Endothelial cell of umbilical vein (primary cell): ENCODE measurements at regions of chr3 and their contacts with region 1.

Region 1: DNA sequence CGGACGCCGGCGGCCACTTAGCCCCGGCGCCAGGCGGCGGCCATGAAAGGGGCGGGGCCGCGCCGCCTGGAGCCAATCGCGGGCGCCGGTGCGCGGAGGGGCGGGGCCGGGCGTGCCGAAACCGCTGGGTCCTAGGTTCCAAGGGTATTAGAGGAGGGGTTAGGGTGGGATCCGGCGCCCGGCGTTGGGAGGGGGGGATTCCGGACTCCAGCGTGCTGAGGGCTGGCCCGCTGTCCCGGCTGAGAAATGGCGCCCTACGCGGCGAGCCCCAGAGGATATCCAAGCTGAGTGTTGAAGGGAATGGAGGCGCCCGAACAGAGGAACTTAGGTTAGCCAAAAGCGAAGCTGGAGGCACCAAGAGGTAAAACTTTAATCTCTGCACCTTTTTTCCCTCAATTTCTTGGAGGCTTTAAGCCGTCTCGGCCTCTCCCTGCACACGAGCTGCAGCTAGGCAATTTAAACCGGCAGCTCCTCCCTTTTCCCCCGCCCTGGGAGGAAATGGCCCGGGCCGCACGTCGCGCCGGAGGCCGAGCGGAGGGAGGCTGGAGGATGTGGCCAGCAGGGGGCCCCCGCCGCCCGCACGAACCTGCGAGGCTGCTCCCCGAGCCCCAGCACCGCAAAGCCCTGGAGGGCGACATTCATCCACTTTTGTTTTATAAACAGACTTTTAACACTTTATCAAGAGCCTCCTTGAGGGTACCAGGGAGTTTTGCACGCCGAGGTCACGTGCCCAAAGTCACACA is at the start of gene XXYLT1:
- DNase-seq: peak; percentile 93
- H3K4me3 ChIP-seq: peak within 1 kb of the TSS; percentile 79 to 91 (median 79)
- H3K27ac ChIP-seq: peak within 1 kb of the TSS; percentile 68
- H3K4me1 ChIP-seq: peaks cover 23% of the 10 kb centered on the region
- H3K27me3 ChIP-seq: no peaks in the 10 kb centered on the region
- CTCF ChIP-seq: peak; percentile 94 to 98
- POLR2A ChIP-seq: peak; percentile 84
- total RNA-seq, gene XXYLT1: 58.6 and 78.1 TPM in 2 replicates

Region 2: GRCh38 chr3:194671900-194672808 is 599.1 kb before region 1 on chr3 and contains the start of gene LSG1:
- CTCF ChIA-PET with region 1: interaction called, 28 read pairs
- POLR2A ChIA-PET with region 1: interaction called, 3 read pairs
- dilution Hi-C with region 1: no loop called
- intact Hi-C with region 1: no loop called
- DNase-seq: peak; percentile 96
- H3K4me3 ChIP-seq: peak within 1 kb of the TSS; percentile 61 to 97 (median 64)
- H3K27ac ChIP-seq: peak within 1 kb of the TSS; percentile 93
- H3K4me1 ChIP-seq: peaks cover 15% of the 10 kb centered on the region
- H3K27me3 ChIP-seq: peaks cover 0 to 2% of the 10 kb centered on the region in 2 experiments
- CTCF ChIP-seq: no peak
- POLR2A ChIP-seq: peak; percentile 80
- total RNA-seq, gene LSG1: 48.3 and 52.7 TPM in 2 replicates

Region 3: GRCh38 chr3:195442573-195443390 is 171.5 kb after region 1 on chr3 and contains the start of gene ACAP2:
- CTCF ChIA-PET with region 1: interaction called, 35 read pairs
- POLR2A ChIA-PET with region 1: interaction called, 5 read pairs
- dilution Hi-C with region 1: no loop called
- intact Hi-C with region 1: loop called (anchors 1 kb)
- DNase-seq: peak; percentile 100
- H3K4me3 ChIP-seq: peak within 1 kb of the TSS; percentile 70 to 88 (median 81)
- H3K27ac ChIP-seq: peak within 1 kb of the TSS; percentile 63
- H3K4me1 ChIP-seq: peaks cover 15% of the 10 kb centered on the region
- H3K27me3 ChIP-seq: no peaks in the 10 kb centered on the region
- CTCF ChIP-seq: no peak
- POLR2A ChIP-seq: peak; percentile 93
- total RNA-seq, gene ACAP2: 34.4 and 36.9 TPM in 2 replicates

Region 4: GRCh38 chr3:195517030-195517429 is 245.7 kb after region 1 on chr3:
- CTCF ChIA-PET with region 1: interaction called, 195 read pairs
- POLR2A ChIA-PET with region 1: no interaction called
- dilution Hi-C with region 1: no loop called
- intact Hi-C with region 1: loop called (anchors 1 kb)
- DNase-seq: no peak
- H3K4me3 ChIP-seq: no peak overlapping the region
- H3K27ac ChIP-seq: no peak overlapping the region
- H3K4me1 ChIP-seq: no peaks in the 10 kb centered on the region
- H3K27me3 ChIP-seq: no peaks in the 10 kb centered on the region
- CTCF ChIP-seq: no peak
- POLR2A ChIP-seq: no peak

Region 5: DNA sequence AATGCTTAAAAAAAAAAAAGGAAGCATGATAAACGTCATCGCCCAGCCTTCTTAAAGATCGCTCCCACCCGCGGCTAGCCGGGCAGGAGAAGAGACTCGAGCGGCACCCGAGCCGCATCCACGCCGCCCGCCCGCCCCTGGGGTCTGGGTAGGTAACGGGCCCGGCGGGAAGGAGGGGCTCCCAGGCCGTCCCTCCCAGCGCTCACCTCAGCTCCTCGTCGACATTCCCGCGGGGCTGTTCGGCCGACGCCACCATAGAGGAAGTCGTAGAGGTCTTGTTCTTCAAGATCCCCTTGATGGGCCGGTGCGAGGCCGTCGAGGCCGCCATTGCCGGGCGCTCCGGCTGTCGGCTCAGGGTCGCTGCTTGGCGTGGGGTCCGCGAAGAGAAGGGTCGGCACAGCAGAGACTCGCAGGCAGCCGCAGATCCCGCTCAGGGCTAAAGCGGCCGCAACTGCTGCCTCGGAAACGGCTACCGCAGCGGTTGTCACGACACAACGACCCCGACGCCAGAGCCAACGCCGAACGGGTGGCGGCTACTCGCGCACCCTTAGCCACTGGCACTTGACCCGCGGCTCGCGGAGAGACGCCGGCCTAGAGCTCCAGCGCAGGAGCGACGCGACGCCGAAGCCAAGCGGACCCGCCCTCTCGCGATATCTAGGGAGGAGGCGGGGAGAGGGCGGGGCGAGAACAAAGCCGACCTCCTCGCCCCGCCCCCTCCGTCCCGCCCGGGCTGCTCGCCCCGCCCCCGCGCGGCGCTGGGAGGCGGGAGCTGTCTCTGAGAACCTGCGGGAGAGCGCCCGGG is 271.6 kb after region 1 on chr3 and contains the start of gene PPP1R2:
- CTCF ChIA-PET with region 1: interaction called, 23 read pairs
- POLR2A ChIA-PET with region 1: interaction called, 10 read pairs
- dilution Hi-C with region 1: no loop called
- intact Hi-C with region 1: no loop called
- DNase-seq: peak; percentile 92
- H3K4me3 ChIP-seq: peak within 1 kb of the TSS; percentile 30 to 97 (median 93)
- H3K27ac ChIP-seq: peak within 1 kb of the TSS; percentile 61
- H3K4me1 ChIP-seq: peaks cover 33% of the 10 kb centered on the region
- H3K27me3 ChIP-seq: peaks cover 2% of the 10 kb centered on the region in 2 experiments
- CTCF ChIP-seq: no peak
- POLR2A ChIP-seq: peak; percentile 95
- total RNA-seq, gene PPP1R2: 36.2 and 37.3 TPM in 2 replicates